ENCODE measurements at regions of chr20 and their contacts with region 1.

Region 1: DNA sequence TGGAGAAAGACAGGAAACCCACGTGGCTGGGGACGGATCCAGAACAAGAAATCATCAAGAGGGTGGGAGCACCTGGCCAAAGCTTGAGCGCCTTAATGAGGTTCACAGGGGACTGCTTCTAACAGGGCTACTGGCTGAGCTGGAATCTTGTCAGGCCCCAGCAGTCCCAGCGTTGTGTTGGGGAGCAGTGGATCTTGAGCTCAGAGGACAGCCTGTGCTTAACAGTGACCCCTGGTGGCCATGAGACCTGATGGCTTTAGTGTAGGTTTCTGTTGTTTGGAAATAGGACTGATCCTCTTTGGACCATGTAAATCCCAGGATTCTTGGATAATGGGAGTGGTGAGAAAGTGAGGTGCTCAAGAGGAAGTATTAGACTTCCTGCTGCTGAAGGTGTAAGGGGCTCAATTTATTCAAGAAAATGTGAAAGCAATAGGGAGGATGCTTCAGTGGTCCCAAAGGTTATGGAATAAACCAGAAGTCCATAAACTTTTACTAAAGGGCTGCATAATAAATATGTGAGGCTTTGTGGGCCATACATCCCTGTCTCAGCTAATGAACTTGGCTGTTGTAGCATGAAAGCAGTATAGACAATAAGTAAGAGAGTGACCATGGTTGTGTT is 216.2 kb downstream of the NFATC2 start:
- DNase-seq: no peak
- ATAC-seq: peak; percentile 59
- H3K4me3 ChIP-seq: no peak overlapping the region
- H3K27ac ChIP-seq: no peak overlapping the region
- H3K4me1 ChIP-seq: no peaks in the 10 kb centered on the region
- H3K27me3 ChIP-seq: no peaks in the 10 kb centered on the region; a peak in 2 of 4 replicates
- CTCF ChIP-seq: peak; percentile 46 to 67 (median 65)
- EP300 ChIP-seq: no peak
- POLR2A ChIP-seq: no peak
- RAD21 ChIP-seq: peak; percentile 26; the same call in 1 of the 2 replicates

Region 2: DNA sequence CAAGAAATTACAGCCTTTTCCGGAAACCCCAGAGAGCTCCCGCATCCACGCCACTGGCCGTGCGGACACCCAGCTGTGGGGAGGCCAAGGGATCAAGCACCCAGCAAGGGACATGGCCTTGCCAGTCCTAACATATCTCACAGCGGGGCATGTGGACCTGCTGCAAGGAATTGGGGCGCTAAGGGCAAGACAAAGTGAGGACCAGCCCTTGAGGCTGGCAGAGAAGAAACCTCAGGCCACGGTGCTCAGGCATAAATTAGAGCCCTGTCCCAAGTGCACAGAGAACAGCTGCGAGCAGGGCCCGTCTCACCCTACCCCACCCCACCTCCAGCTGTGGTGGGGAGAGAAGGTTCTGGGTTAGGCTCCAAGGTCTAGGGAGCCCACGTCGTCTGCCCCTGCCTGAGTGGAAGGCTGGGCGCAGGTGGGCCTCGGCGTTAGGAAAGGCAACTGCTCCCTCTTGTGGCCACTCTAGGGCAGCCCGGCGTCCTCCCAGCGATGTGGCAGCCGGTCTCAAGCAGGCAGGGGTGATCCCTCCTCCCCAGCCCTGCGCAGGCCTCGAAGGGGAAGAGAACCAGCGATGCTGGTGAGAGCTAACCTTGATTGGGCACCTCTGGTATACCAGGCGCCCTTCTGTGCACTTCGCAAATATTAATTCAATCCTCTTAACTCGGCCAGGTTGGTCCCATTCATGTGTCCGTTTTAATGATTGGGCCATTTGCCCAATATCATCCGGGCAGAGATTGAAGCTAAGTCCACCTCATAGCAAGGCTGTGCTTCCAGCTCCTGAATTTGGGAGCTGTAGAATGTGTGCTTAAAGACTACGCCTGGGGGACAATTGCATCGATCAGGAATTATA is 19.6 kb before region 1 on chr20:
- CTCF ChIA-PET with region 1: interaction called, 10 read pairs
- POLR2A ChIA-PET with region 1: no interaction called
- RAD21 ChIA-PET with region 1: interaction called, 4 read pairs
- SMC1A ChIA-PET with region 1: interaction called, 5 read pairs
- in situ Hi-C with region 1: no loop called
- intact Hi-C with region 1: no loop called
- DNase-seq: no peak
- ATAC-seq: peak; percentile 100
- H3K4me3 ChIP-seq: no peak overlapping the region
- H3K27ac ChIP-seq: no peak overlapping the region
- H3K4me1 ChIP-seq: no peaks in the 10 kb centered on the region
- H3K27me3 ChIP-seq: peaks cover 1 to 2% of the 10 kb centered on the region in 2 experiments; a peak in 3 of 4 replicates
- CTCF ChIP-seq: peak; percentile 89 to 91 (median 89)
- EP300 ChIP-seq: no peak
- POLR2A ChIP-seq: no peak
- RAD21 ChIP-seq: peak; percentile 83

Region 3: GRCh38 chr20:51360451-51361221 is 34.3 kb after region 1 on chr20:
- CTCF ChIA-PET with region 1: no interaction called
- POLR2A ChIA-PET with region 1: no interaction called
- RAD21 ChIA-PET with region 1: no interaction called
- SMC1A ChIA-PET with region 1: no interaction called
- in situ Hi-C with region 1: no loop called
- intact Hi-C with region 1: no loop called
- DNase-seq: no peak
- ATAC-seq: no peak
- H3K4me3 ChIP-seq: no peak overlapping the region
- H3K27ac ChIP-seq: no peak overlapping the region
- H3K4me1 ChIP-seq: peaks cover 3% of the 10 kb centered on the region; the same call in 1 of the 2 replicates
- H3K27me3 ChIP-seq: no peaks in the 10 kb centered on the region
- CTCF ChIP-seq: no peak
- EP300 ChIP-seq: no peak
- POLR2A ChIP-seq: no peak
- RAD21 ChIP-seq: no peak

Measured in GM12878 (cell line).